Dendritic cell treated with granulocyte-macrophage colony-stimulating factor and Interleukin-4, amounts not matched to agents 40 ng/mL and 50 ng/mL, for 4 days (primary cell): ENCODE measurements at regions of chr3 and their contacts with region 1.

Region 1: DNA sequence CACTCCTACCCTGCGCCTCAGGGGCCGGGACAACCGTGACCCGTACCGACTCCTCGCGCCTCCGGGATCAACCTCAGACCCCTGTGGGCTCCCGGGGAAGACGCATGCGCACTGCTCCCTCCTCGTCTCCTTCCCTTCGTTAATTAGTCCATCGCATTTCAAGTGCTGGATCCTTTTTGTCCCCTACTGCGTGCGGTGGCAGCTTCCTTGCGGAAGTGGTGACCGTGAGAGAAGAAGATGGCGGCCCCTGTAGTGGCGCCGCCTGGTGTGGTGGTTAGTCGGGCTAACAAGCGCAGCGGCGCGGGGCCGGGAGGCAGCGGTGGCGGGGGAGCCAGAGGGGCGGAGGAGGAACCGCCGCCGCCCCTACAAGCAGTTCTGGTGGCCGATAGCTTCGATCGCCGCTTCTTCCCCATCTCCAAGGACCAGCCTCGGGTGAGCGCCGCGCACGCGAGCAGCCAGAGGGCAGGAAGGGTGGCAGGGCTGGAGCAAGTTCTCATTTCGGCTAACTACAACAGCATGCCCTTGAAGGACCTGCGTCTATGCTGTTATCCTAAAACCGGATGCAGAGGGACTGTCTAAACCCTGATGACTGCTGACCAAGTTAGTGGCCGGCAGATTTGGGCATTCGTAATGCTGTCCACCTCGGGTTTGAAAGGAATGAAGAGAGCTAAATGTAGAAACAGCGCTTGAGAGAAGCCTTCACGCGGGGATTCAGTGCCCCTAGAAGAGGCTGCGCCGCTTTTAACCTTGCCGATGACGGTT is at the start of gene EIF2B5:
- H3K4me3 Mint-ChIP-seq: peak within 1 kb of the TSS; percentile 95
- H3K27ac Mint-ChIP-seq: peak within 1 kb of the TSS; percentile 87
- H3K4me1 Mint-ChIP-seq: peaks cover 27% of the 10 kb centered on the region
- H3K27me3 Mint-ChIP-seq: no peaks in the 10 kb centered on the region

Region 2: GRCh38 chr3:183895296-183895695 is 240.0 kb before region 1 on chr3:
- intact Hi-C with region 1: loop called (anchors 10 kb)
- H3K4me3 Mint-ChIP-seq: no peak overlapping the region
- H3K27ac Mint-ChIP-seq: no peak overlapping the region
- H3K4me1 Mint-ChIP-seq: peaks cover 6% of the 10 kb centered on the region
- H3K27me3 Mint-ChIP-seq: peaks cover 18% of the 10 kb centered on the region

Region 3: GRCh38 chr3:184154885-184155643 is 19.7 kb after region 1 on chr3 and contains the start of gene DVL3:
- intact Hi-C with region 1: loop called (anchors 1 kb)
- H3K4me3 Mint-ChIP-seq: peak within 1 kb of the TSS; percentile 96
- H3K27ac Mint-ChIP-seq: peak within 1 kb of the TSS; percentile 87
- H3K4me1 Mint-ChIP-seq: peaks cover 40% of the 10 kb centered on the region
- H3K27me3 Mint-ChIP-seq: no peaks in the 10 kb centered on the region

Region 4: DNA sequence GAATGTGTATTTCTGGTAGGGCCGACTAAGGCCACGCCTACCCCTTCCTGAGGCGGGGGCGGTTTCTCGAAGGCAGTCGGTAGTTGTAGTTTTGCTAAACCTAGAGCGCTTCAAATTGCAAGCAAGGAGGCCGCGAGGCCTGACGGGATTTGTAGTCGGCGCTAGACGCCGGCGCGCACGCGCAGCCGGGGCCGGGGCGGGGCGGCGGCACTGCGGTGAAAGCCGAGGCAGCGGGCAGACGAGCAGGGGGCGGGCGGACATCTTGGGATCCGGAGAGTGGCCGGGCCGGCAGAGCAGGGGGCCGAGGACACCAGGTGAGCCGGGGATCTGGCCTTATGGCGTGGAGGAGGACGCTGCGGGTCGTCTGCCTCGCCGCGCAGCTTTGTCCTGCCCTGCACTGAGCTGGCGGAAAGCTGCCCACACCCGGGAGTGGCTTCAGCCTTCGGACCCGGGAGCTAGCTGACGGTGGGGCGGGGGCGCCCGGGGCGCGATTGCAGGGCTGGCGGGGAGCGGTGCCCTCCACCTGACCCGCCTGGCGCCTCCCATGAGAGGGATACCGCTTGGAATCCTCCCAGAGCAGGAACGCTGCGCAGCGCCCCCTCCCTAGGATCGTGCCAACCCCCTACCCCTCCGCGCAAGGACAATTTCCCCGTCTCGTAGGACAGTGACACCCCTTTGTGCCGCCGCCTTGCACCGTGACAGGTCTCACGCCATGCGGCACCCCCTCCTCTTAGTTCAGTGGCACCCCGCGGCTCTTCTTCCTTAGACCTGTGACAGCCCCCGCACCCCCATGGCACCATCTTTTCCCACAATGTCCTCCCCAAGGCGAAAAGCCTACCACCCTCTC is 39.5 kb after region 1 on chr3 and contains the start of gene AP2M1:
- intact Hi-C with region 1: loop called (anchors 1 kb)
- H3K4me3 Mint-ChIP-seq: peak within 1 kb of the TSS; percentile 99
- H3K27ac Mint-ChIP-seq: peak within 1 kb of the TSS; percentile 98
- H3K4me1 Mint-ChIP-seq: peaks cover 54% of the 10 kb centered on the region
- H3K27me3 Mint-ChIP-seq: no peaks in the 10 kb centered on the region

Region 5: GRCh38 chr3:184185461-184186308 is 50.4 kb after region 1 on chr3 and contains the start of gene ABCF3:
- intact Hi-C with region 1: loop called (anchors 2 kb)
- H3K4me3 Mint-ChIP-seq: peak within 1 kb of the TSS; percentile 96
- H3K27ac Mint-ChIP-seq: peak within 1 kb of the TSS; percentile 94
- H3K4me1 Mint-ChIP-seq: peaks cover 76% of the 10 kb centered on the region
- H3K27me3 Mint-ChIP-seq: no peaks in the 10 kb centered on the region

Region 6: GRCh38 chr3:184298759-184299496 is 163.6 kb after region 1 on chr3 and contains the start of gene PSMD2:
- intact Hi-C with region 1: loop called (anchors 2 kb)
- H3K4me3 Mint-ChIP-seq: peak within 1 kb of the TSS; percentile 98
- H3K27ac Mint-ChIP-seq: peak within 1 kb of the TSS; percentile 91
- H3K4me1 Mint-ChIP-seq: peaks cover 31% of the 10 kb centered on the region
- H3K27me3 Mint-ChIP-seq: peaks cover 3% of the 10 kb centered on the region